ENCODE measurements at regions of chr12 and their contacts with region 1.

Region 1: DNA sequence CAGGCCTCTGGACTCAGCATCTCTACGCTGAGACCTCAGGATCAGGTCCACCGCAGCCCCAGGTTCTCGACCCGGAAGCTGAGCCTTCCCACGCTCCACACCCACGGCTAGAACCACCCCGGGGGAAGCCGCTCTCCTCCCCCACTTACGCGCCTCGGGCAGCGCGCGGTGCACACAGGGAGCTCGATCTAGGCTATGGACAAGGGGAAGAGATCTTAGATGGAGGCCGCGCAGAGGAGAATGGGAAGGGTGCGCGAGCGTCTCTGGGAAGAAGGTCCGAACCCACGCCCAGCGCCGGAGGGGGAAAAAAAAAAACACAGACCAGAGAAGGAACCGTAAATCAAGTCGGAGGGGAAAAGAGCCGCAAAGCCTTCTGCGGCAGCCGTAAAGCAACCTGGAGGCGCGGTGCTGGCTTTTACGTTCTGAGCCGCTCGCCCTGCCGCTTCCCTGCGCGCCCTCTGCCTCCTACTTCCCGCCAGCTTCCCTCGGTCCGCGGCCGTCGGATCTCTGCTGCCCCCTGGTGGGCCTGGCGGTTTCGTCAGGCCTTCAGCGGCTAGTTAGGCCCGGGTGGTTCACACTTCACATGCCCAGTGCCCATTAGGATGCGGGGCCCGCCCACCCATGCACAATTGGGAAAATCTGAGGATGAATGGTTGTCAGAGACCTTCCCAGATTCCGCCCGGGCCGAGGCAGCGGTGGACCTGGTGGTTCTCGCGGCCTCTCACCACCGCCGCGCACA is at the start of gene RAD52:
- DNase-seq: peak; percentile 99
- H3K4me3 ChIP-seq: peak within 1 kb of the TSS; percentile 68 to 83 (median 69)
- H3K27ac ChIP-seq: peak within 1 kb of the TSS; percentile 83 to 93 (median 88)
- H3K4me1 ChIP-seq: peaks cover 11 to 15% (median 14%) of the 10 kb centered on the region in 4 donors
- H3K27me3 ChIP-seq: no peaks in the 10 kb centered on the region
- CTCF ChIP-seq: peak; percentile 95 to 99 (median 97)
- EP300 ChIP-seq: no peak
- POLR2A ChIP-seq: peak; percentile 43
- total RNA-seq, gene RAD52: 6.6 to 18.8 (median 11.6) TPM

Region 2: DNA sequence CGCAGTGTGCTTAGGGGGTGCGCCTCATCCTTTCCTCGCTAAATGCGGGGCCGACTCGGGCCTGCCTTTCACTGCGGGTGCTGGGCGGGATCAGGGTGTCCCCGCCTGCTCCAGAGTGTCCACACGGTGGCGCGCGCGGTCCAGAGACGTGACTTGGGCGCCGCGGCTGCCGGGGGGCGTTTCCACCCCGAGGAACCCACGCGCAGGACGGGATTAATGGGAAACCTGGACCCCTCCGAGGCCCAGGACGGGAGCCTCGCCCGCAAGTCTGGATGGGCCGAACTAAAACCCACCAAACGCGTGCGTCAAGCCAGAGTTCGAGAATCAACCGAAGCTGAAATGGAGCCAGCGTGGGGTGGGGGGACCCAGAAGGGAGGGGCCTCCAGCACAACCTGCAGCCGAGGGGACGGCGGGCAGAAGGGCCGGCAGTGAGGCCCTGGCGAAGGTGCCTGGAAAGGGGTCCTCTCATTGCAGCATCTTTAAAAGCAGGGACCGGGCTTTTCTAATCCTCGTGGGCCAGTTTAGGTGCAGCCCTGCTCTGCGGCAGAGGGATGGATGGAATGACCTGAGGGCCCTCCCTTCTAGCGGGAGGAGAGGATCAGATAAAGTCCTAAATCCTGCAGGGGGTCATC is 379.7 kb before region 1 on chr12:
- intact Hi-C with region 1: loop called (anchors 2 kb)
- DNase-seq: peak; percentile 96
- H3K4me3 ChIP-seq: peak overlapping the region; percentile 61 to 78 (median 68)
- H3K27ac ChIP-seq: peak overlapping the region; percentile 89 to 96 (median 96)
- H3K4me1 ChIP-seq: peaks cover 31 to 37% (median 36%) of the 10 kb centered on the region in 4 donors
- H3K27me3 ChIP-seq: no peaks in the 10 kb centered on the region
- CTCF ChIP-seq: peak; percentile 92 to 97 (median 96)
- EP300 ChIP-seq: no peak
- POLR2A ChIP-seq: no peak

Region 3: DNA sequence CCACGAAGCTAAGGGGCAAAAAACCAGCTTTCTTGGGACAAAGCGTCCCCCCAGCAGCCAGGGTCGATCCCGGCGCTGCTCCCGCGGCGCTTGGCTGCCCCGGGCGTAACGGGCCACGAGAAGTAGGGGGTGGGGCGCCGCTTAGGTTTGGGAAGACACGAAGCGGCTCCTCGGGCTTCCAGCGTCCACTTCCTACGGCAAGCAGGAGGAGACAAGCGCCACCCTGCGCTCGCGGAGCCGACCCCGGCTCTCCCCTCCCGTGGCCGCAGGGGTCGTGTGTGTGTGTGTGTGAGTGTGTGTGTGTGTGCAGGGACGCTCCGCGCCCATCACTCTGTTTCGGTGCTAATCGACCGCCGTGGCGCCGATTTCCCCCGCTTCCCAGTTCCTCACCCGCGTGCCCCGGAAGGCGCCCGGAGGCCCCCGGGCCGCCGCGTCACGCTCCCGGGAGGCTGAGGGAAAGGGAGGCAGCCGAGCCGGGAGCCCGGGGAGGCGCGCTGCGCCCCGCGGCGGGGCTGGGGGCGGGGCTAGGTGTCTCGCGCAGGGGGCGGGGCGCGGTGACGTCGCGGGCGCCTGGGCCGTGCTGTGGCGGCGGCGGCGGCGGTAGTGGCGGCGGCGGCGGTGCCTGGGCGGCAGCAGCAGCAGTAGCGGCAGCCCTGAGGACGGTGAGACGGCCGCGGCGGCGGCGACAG is 41.2 kb after region 1 on chr12 and contains the start of gene ERC1:
- intact Hi-C with region 1: loop called (anchors 5 kb)
- DNase-seq: peak; percentile 96
- H3K4me3 ChIP-seq: peak within 1 kb of the TSS; percentile 88 to 99 (median 98)
- H3K27ac ChIP-seq: peak within 1 kb of the TSS; percentile 95 to 99 (median 99)
- H3K4me1 ChIP-seq: peaks cover 31 to 59% (median 57%) of the 10 kb centered on the region in 4 donors
- H3K27me3 ChIP-seq: no peaks in the 10 kb centered on the region
- CTCF ChIP-seq: peak in 1 of 3 experiments; percentile 15
- EP300 ChIP-seq: no peak
- POLR2A ChIP-seq: peak; percentile 19
- total RNA-seq, gene ERC1: 50.0 to 88.1 (median 59.7) TPM

Region 4: GRCh38 chr12:1093166-1093751 is 143.6 kb after region 1 on chr12:
- intact Hi-C with region 1: loop called (anchors 5 kb)
- DNase-seq: no peak
- H3K4me3 ChIP-seq: no peak overlapping the region
- H3K27ac ChIP-seq: no peak overlapping the region
- H3K4me1 ChIP-seq: peaks cover 0 to 25% (median 18%) of the 10 kb centered on the region in 4 donors
- H3K27me3 ChIP-seq: no peaks in the 10 kb centered on the region
- CTCF ChIP-seq: peak; percentile 63 to 81 (median 77)
- EP300 ChIP-seq: no peak
- POLR2A ChIP-seq: no peak

Region 5: DNA sequence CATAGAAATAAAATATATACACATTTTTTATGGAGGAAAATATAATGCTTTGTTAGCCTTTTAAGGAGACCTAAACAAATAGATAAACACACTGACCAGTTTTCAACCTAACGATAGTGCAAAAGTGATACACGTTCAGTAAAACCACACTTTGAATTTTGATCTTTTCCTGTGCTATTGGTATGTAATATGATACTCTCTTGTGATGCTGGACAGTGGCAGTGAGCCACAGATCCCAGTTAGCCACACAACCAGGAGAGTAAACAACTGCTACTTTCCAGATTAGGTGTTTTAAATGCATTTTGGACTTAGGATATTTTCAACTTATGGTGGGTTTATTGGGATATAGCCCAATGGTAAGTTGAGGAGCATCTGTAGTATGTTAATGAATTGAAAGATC is 284.5 kb after region 1 on chr12:
- intact Hi-C with region 1: no loop called
- DNase-seq: no peak
- H3K4me3 ChIP-seq: no peak overlapping the region
- H3K27ac ChIP-seq: no peak overlapping the region
- H3K4me1 ChIP-seq: no peaks in the 10 kb centered on the region
- H3K27me3 ChIP-seq: no peaks in the 10 kb centered on the region
- CTCF ChIP-seq: no peak
- EP300 ChIP-seq: no peak
- POLR2A ChIP-seq: no peak

Measured in esophagus muscularis mucosa (tissue), 4 donors.